CD4-positive, alpha-beta T cell (primary cell): ENCODE measurements at regions of chr12 and their contacts with region 1.

Region 1: DNA sequence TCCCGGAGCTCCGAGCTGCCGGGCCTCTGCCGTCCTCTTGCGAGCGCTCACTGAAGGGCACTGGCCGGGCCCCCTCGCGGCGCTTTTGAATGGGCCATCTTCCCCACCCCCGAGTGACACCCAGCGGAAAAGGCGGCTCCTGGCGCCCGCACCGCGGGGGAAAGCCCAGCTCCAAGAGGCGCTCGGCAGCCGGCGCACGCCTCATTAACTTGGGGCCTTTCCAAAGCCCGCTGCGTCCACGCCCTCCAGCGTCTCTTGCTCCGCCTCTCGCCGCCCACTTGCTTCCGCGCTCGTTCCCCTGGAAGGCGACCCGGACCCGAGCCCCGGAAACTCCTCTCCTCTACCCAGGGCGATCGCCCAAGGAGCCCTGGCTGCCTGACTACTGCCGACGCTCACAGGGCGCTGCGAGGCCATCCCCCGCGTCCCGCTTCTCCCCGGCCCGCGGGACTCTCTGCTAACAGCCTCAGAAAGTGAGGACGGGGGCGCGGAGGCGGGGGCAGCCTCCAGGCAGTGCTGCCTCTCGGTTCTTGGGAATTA is at the start of gene PHLDA1:
- DNase-seq: peak; percentile 79 to 97 (median 84)
- ATAC-seq: peak; percentile 83
- H3K4me3 ChIP-seq: peak within 1 kb of the TSS; percentile 92
- H3K4me3 Mint-ChIP-seq: peak within 1 kb of the TSS; percentile 88
- H3K27ac ChIP-seq: peak within 1 kb of the TSS; percentile 69 to 88
- H3K27ac Mint-ChIP-seq: peak within 1 kb of the TSS; percentile 87
- H3K4me1 ChIP-seq: peaks cover 26% of the 10 kb centered on the region
- H3K4me1 Mint-ChIP-seq: peaks cover 43% of the 10 kb centered on the region
- H3K27me3 ChIP-seq: no peaks in the 10 kb centered on the region
- H3K27me3 Mint-ChIP-seq: no peaks in the 10 kb centered on the region
- CTCF ChIP-seq: peak; percentile 55
- total RNA-seq, gene PHLDA1: 6.5 TPM

Region 2: DNA sequence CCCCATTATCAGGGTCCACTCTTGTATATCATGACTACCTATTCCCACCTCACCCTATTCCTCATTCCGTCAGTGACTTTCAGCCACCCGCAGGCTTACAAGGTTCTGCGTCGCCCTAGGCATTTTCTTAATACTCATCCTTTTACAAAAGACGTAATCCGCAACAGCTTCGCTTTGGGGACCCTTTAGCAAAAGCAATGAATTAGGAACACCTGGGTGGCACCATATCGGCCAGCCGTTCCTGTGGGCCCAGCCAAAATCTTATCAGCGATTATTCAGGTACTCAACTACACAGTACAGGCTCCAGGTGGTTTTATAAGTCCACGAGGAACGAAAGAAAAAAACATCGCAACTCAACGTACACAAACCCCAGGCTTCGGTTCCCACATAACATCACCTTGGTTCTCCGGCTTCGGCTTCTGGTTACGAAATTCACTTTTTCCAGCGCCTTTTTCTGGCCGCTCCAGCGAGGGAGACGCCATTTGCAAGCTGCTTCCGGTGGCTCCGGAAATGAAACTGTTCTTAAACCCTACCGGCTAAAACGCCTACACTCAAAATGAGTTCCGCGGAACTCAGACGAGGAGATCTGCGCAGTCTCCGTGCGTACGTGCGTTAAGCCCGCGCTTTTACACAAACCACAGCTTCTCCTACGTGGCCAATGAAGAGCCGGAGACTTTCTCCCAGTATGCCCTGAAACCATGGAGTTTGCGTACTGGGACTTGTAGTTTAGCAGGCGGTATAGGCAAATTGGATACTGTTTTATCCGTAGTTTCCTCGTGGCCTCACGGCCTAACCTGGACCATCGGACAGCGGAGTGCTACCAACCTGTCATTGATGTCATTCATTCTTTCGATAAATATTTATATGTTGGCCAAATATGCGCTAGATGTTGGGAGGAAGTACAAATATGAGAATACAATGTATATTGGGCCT is 520.2 kb before region 1 on chr12 and contains the start of gene KRR1:
- CTCF ChIA-PET with region 1: interaction called, 3 read pairs
- POLR2A ChIA-PET with region 1: interaction called, 28 read pairs
- intact Hi-C with region 1: loop called (anchors 5 kb)
- DNase-seq: peak; percentile 74 to 98 (median 85)
- ATAC-seq: peak; percentile 97
- H3K4me3 ChIP-seq: peak within 1 kb of the TSS; percentile 81
- H3K4me3 Mint-ChIP-seq: peak within 1 kb of the TSS; percentile 99
- H3K27ac ChIP-seq: peak within 1 kb of the TSS; percentile 81 to 92
- H3K27ac Mint-ChIP-seq: peak within 1 kb of the TSS; percentile 95
- H3K4me1 ChIP-seq: peaks cover 8% of the 10 kb centered on the region
- H3K4me1 Mint-ChIP-seq: peaks cover 38% of the 10 kb centered on the region
- H3K27me3 ChIP-seq: no peaks in the 10 kb centered on the region
- H3K27me3 Mint-ChIP-seq: no peaks in the 10 kb centered on the region
- CTCF ChIP-seq: no peak
- total RNA-seq, gene KRR1: 144 to 148 TPM

Region 3: DNA sequence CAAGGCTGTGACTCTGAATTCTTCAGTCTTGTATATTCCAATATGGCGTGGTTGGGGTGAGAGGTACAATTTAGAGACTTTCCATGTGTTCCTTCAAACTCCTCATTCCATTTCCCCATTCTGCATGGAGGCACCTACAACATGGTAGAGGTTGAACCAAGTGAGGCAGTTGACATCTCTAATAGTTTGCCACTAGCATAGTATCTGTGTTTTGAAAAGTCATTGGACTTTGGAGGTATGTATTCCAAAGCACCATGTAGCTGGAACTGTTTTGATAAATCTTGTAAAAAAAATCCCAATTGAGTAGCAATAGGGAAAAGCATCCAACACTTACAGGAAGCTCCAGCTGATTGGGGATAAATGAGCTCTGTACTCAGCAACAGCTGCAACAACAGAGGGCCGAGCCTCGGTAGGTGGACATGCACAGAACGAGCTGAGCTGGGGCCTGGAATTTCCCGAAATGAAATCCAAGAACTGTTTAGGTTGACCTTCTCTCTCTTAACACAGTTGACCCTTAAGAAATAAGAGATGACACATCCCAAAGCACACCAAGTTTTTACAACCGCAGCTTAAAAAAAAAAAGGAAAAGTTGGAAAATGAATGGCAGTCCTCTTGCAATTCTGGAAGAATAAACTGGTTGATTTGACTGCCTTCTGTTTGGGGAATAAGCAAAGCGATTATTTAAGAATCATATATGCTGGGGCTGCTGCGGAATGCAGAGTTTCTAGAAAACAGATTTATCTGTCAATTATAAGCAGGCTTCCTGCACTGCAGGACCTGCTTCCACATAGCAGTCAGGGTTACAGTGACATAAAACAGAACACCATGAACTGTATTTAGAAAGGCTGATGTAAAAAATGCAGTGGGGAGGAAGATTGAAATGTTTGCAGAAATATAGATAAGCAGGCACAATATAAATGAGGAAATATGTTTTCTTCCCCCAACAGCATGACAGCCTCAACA is 325.6 kb before region 1 on chr12:
- CTCF ChIA-PET with region 1: no interaction called
- POLR2A ChIA-PET with region 1: no interaction called
- intact Hi-C with region 1: loop called in 1 of 2 experiments (anchors 10 kb)
- DNase-seq: no peak
- ATAC-seq: no peak
- H3K4me3 ChIP-seq: no peak overlapping the region
- H3K4me3 Mint-ChIP-seq: no peak overlapping the region
- H3K27ac ChIP-seq: no peak overlapping the region
- H3K27ac Mint-ChIP-seq: no peak overlapping the region
- H3K4me1 ChIP-seq: peaks cover 5% of the 10 kb centered on the region
- H3K4me1 Mint-ChIP-seq: peaks cover 18% of the 10 kb centered on the region
- H3K27me3 ChIP-seq: no peaks in the 10 kb centered on the region
- H3K27me3 Mint-ChIP-seq: no peaks in the 10 kb centered on the region
- CTCF ChIP-seq: no peak

Region 4: DNA sequence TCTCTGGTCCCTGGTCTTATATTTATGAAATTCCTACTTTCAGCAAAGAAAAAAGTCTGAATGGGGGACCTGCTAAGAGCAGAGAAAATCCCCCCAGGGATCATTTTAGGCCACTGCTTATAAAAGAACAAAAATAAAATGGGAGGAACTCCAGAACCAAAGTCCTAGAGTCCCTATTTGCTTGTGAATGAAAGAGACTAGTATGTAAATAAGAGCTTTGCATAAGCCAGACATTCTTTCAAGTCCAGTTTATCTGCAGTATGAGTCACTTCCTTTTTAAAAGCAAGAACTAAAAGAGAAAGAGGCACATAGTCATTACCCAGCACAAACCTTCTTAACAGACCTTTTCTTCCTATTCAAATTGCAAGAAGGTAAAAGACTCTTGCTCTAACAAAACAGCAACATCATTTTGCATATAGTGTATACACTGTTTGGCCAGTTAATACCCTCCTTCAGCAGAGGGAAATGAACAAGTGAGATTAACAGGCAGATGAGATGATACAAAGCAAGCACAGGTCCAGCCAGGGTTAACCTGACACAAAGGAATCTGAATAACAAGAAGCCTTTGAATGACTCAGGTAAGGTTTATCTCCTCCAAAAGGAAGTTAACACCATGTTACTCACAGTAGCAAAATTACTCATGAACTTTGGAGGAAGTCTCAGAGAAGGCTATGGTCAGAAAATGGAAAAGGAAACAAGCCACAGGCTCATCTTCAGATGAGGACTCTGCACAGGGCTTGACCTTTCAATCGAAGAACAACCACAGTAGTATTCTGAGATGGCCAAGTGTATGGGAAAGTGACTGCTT is 87.3 kb before region 1 on chr12:
- CTCF ChIA-PET with region 1: interaction called, 10 read pairs
- POLR2A ChIA-PET with region 1: no interaction called
- intact Hi-C with region 1: no loop called
- DNase-seq: peak in 4 of 14 experiments; percentile 30 to 65 (median 56)
- ATAC-seq: peak; percentile 88
- H3K4me3 ChIP-seq: no peak overlapping the region
- H3K4me3 Mint-ChIP-seq: peak overlapping the region; percentile 46
- H3K27ac ChIP-seq: peak overlapping the region in 1 of 2 donors; percentile 31
- H3K27ac Mint-ChIP-seq: peak overlapping the region; percentile 77
- H3K4me1 ChIP-seq: peaks cover 14% of the 10 kb centered on the region
- H3K4me1 Mint-ChIP-seq: peaks cover 15% of the 10 kb centered on the region
- H3K27me3 ChIP-seq: no peaks in the 10 kb centered on the region
- H3K27me3 Mint-ChIP-seq: no peaks in the 10 kb centered on the region
- CTCF ChIP-seq: no peak

Region 5: DNA sequence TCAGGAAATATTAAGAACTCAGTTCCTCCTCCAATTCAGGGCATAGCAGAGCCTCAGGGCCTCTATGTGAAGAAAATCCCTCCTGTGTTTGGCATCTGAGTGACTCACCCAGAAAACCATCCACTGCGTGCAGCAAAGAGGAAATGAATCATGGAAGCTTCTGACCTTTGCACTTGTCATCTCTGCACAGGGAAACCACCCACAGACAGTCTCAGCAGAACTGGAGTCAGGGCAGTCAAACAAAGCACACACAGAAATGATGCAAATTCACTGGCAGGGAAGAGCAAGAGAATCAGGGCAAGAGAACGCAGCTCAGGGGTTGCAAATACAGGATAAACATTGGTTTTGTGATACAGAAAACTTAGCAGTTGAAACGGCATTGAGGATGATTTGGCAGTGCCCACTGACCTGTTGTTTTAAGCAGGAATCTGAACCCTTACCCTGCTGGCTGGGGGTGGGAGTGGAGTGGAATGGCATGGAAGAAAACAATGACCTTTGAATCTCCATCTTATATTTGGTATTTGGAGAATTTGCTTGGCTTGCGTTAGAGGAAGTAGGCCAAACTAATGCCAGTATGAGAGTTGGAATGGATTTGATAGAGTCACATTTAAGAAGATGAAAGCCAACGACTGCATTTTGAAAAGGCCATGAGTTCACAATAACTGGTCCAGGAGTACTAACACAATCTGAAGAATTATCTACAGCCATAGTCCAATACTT is 53.5 kb before region 1 on chr12:
- CTCF ChIA-PET with region 1: interaction called, 17 read pairs
- POLR2A ChIA-PET with region 1: interaction called, 18 read pairs
- intact Hi-C with region 1: loop called in 1 of 2 experiments (anchors 1 kb)
- DNase-seq: peak; percentile 28 to 93 (median 62)
- ATAC-seq: peak; percentile 93
- H3K4me3 ChIP-seq: no peak overlapping the region
- H3K4me3 Mint-ChIP-seq: peak overlapping the region; percentile 36
- H3K27ac ChIP-seq: peak overlapping the region; percentile 29 to 85
- H3K27ac Mint-ChIP-seq: peak overlapping the region; percentile 74
- H3K4me1 ChIP-seq: peaks cover 31% of the 10 kb centered on the region
- H3K4me1 Mint-ChIP-seq: peaks cover 37% of the 10 kb centered on the region
- H3K27me3 ChIP-seq: no peaks in the 10 kb centered on the region
- H3K27me3 Mint-ChIP-seq: no peaks in the 10 kb centered on the region
- CTCF ChIP-seq: no peak

Region 6: GRCh38 chr12:76020731-76021672 is 10.6 kb before region 1 on chr12:
- CTCF ChIA-PET with region 1: interaction called, 28 read pairs
- POLR2A ChIA-PET with region 1: interaction called, 72 read pairs
- intact Hi-C with region 1: loop called in 1 of 2 experiments (anchors 1 kb)
- DNase-seq: peak in 12 of 14 experiments; percentile 34 to 91 (median 50)
- ATAC-seq: peak; percentile 79
- H3K4me3 ChIP-seq: peak overlapping the region; percentile 6
- H3K4me3 Mint-ChIP-seq: peak overlapping the region; percentile 26
- H3K27ac ChIP-seq: peak overlapping the region; percentile 58 to 88
- H3K27ac Mint-ChIP-seq: peak overlapping the region; percentile 89
- H3K4me1 ChIP-seq: peaks cover 26% of the 10 kb centered on the region
- H3K4me1 Mint-ChIP-seq: peaks cover 26% of the 10 kb centered on the region
- H3K27me3 ChIP-seq: no peaks in the 10 kb centered on the region
- H3K27me3 Mint-ChIP-seq: no peaks in the 10 kb centered on the region
- CTCF ChIP-seq: no peak